B cell (primary cell): ENCODE measurements at regions of chr5 and their contacts with region 1.

Region 1: GRCh38 chr5:77491783-77492652 is at the start of gene WDR41:
- DNase-seq: peak; percentile 93
- ATAC-seq: peak; percentile 85
- H3K4me3 ChIP-seq: peak within 1 kb of the TSS; percentile 60 to 98 (median 95)
- H3K4me3 Mint-ChIP-seq: peak within 1 kb of the TSS; percentile 95
- H3K27ac ChIP-seq: peak within 1 kb of the TSS; percentile 71 to 88
- H3K27ac Mint-ChIP-seq: peak within 1 kb of the TSS; percentile 97
- H3K4me1 ChIP-seq: peaks cover 5 to 6% of the 10 kb centered on the region in 2 donors
- H3K4me1 Mint-ChIP-seq: peaks cover 20% of the 10 kb centered on the region
- H3K27me3 ChIP-seq: no peaks in the 10 kb centered on the region
- H3K27me3 Mint-ChIP-seq: peaks cover 6% of the 10 kb centered on the region
- CTCF ChIP-seq: peak; percentile 92
- total RNA-seq, gene WDR41: 30.6 and 36.3 TPM in 2 replicates

Region 2: DNA sequence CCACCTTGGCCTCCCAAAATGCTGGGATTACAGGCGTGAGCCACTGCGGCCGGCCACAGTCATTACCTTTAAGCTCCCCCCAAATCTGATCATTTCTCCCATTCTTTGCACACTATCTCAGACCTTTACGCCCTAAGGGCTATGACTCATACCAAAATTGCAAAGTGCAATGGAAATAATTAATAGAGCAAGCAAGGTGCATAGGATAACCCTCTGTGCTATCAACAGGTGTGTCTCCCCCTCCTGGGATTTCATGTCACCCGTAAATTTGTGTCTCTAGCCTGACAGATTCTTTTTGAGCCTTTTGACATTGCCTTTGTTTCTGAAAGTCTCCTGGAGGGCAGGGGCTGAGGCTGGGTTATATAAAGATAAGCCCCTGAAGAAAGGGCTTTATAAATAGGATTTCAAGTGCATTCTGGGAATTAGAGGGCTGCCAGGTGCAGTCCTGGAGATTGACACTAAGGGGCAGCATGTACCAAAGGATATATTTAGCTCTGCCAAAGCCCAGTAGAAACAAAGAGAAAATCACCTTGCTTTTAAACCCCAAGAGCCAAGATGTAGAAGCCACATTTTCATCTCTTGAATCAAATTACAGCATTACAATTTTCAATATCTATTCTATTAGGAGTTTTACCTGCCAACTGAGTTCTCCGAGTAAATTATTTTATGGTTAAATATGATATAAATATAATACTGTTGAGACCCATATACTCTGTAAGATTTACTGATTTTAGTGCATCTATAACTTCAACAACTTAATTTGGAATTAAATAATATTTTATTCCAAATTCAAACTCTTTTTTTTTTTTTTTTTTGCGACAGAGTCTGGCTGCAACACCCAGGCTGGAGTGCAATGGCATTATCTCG is 624.0 kb before region 1 on chr5:
- CTCF ChIA-PET with region 1: interaction called, 13 read pairs
- POLR2A ChIA-PET with region 1: no interaction called
- intact Hi-C with region 1: no loop called
- DNase-seq: peak; percentile 70
- ATAC-seq: peak; percentile 74
- H3K4me3 ChIP-seq: no peak overlapping the region
- H3K4me3 Mint-ChIP-seq: no peak overlapping the region
- H3K27ac ChIP-seq: no peak overlapping the region
- H3K27ac Mint-ChIP-seq: no peak overlapping the region
- H3K4me1 ChIP-seq: peaks cover 0 to 2% of the 10 kb centered on the region in 2 donors
- H3K4me1 Mint-ChIP-seq: no peaks in the 10 kb centered on the region
- H3K27me3 ChIP-seq: no peaks in the 10 kb centered on the region
- H3K27me3 Mint-ChIP-seq: no peaks in the 10 kb centered on the region
- CTCF ChIP-seq: peak; percentile 71

Region 3: DNA sequence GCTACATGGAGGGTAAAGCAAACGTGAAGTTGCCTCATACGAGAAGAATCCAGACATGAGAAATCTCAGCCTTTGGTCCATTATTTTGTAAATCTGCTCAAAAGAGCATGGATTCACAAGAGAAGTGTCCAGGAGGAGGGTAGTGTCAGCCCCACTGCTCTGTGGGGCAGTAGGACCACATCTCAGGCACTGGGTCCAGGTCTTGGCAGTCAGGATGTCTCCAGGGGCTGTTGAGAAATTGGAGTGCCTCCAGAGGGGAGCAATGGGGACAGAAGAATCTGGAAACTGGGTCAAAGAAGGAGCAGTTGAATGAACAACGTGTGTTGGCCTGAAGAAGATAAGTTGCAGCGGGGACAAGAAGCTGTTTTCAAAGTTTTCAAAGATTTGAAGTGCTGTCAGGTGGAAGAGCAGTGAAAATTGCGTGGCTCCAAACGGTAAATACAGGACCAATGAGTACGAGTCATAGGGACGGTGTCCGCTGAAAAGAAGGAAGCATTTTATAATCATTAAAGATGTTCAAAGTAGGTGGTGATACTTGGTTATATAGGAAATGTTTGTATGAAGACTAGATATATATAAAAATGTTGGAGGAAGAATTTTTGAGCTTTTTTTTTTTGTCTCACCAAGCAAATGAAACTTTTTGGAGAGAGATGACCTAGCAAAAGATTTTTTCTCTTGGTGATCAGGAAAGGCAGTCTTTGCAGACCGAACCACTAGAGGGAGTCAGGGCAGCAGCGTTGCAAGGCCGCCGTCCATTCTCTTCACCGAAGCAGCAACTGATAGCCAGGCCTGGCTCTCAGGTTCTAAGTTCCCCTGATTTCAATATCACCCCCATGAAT is 347.8 kb before region 1 on chr5:
- CTCF ChIA-PET with region 1: interaction called, 17 read pairs
- POLR2A ChIA-PET with region 1: no interaction called
- intact Hi-C with region 1: no loop called
- DNase-seq: peak; percentile 55
- ATAC-seq: peak; percentile 71
- H3K4me3 ChIP-seq: no peak overlapping the region
- H3K4me3 Mint-ChIP-seq: no peak overlapping the region
- H3K27ac ChIP-seq: no peak overlapping the region
- H3K27ac Mint-ChIP-seq: no peak overlapping the region
- H3K4me1 ChIP-seq: no peaks in the 10 kb centered on the region
- H3K4me1 Mint-ChIP-seq: no peaks in the 10 kb centered on the region
- H3K27me3 ChIP-seq: peaks cover 0 to 2% (median 0%) of the 10 kb centered on the region in 4 experiments
- H3K27me3 Mint-ChIP-seq: peaks cover 2% of the 10 kb centered on the region
- CTCF ChIP-seq: peak; percentile 81

Region 4: GRCh38 chr5:77449277-77449676 is 42.7 kb before region 1 on chr5:
- CTCF ChIA-PET with region 1: no interaction called
- POLR2A ChIA-PET with region 1: no interaction called
- intact Hi-C with region 1: no loop called
- DNase-seq: no peak
- ATAC-seq: no peak
- H3K4me3 ChIP-seq: no peak overlapping the region
- H3K4me3 Mint-ChIP-seq: no peak overlapping the region
- H3K27ac ChIP-seq: no peak overlapping the region
- H3K27ac Mint-ChIP-seq: no peak overlapping the region
- H3K4me1 ChIP-seq: no peaks in the 10 kb centered on the region
- H3K4me1 Mint-ChIP-seq: no peaks in the 10 kb centered on the region
- H3K27me3 ChIP-seq: no peaks in the 10 kb centered on the region
- H3K27me3 Mint-ChIP-seq: no peaks in the 10 kb centered on the region
- CTCF ChIP-seq: no peak

Region 5: DNA sequence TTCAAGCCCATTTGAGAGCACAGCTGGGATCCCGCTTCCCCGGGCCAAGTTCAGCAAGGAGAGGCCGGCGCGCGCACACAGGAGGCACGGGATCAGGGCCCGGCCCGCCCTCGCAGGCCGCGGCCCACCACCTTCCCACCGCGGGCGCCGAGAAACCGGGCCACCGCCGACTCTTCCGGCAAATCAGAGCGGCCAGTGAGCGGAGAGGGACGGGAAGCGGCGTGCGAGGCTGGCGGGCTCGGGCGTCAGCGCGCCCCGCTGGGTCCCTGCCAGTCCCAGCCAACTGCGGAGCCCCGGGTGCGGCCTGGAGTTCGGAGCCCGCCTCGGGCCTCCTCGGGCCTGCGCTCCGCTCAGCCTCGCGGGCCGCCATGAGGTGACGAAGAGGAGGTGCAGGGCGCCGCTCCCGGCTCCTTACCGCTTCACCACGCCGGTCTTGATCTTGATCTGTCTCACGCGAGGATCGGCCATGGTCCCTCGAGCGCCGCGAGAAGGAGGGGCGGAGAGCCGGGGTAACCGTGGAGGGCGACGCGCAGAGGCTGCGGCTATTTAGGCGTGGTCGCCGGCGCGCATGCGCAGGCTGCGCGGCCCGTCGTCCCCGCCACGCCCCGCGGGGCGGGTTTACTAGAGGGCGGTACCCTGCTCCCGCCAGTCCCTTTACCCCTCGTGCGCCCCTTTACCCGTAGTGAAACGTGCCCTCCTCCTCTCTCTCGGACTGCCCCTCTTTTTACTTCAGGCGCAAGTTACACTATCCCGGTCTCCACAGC is 284.0 kb after region 1 on chr5 and contains the start of gene TBCA:
- CTCF ChIA-PET with region 1: no interaction called
- POLR2A ChIA-PET with region 1: no interaction called
- intact Hi-C with region 1: loop called (anchors 1 kb)
- DNase-seq: peak; percentile 98
- ATAC-seq: peak; percentile 85
- H3K4me3 ChIP-seq: peak within 1 kb of the TSS; percentile 55 to 96 (median 74)
- H3K4me3 Mint-ChIP-seq: peak within 1 kb of the TSS; percentile 90
- H3K27ac ChIP-seq: peak within 1 kb of the TSS; percentile 93 to 98
- H3K27ac Mint-ChIP-seq: peak within 1 kb of the TSS; percentile 98
- H3K4me1 ChIP-seq: peaks cover 19 to 22% of the 10 kb centered on the region in 2 donors
- H3K4me1 Mint-ChIP-seq: peaks cover 35% of the 10 kb centered on the region
- H3K27me3 ChIP-seq: no peaks in the 10 kb centered on the region
- H3K27me3 Mint-ChIP-seq: no peaks in the 10 kb centered on the region
- CTCF ChIP-seq: peak; percentile 42
- total RNA-seq, gene TBCA: 94.8 and 110 TPM in 2 replicates

Region 6: GRCh38 chr5:77798456-77798855 is 306.4 kb after region 1 on chr5:
- CTCF ChIA-PET with region 1: no interaction called
- POLR2A ChIA-PET with region 1: no interaction called
- intact Hi-C with region 1: no loop called
- DNase-seq: no peak
- ATAC-seq: no peak
- H3K4me3 ChIP-seq: no peak overlapping the region
- H3K4me3 Mint-ChIP-seq: no peak overlapping the region
- H3K27ac ChIP-seq: no peak overlapping the region
- H3K27ac Mint-ChIP-seq: no peak overlapping the region
- H3K4me1 ChIP-seq: no peaks in the 10 kb centered on the region
- H3K4me1 Mint-ChIP-seq: no peaks in the 10 kb centered on the region
- H3K27me3 ChIP-seq: peaks cover 0 to 17% (median 4%) of the 10 kb centered on the region in 4 experiments
- H3K27me3 Mint-ChIP-seq: peaks cover 39% of the 10 kb centered on the region
- CTCF ChIP-seq: no peak

Region 7: DNA sequence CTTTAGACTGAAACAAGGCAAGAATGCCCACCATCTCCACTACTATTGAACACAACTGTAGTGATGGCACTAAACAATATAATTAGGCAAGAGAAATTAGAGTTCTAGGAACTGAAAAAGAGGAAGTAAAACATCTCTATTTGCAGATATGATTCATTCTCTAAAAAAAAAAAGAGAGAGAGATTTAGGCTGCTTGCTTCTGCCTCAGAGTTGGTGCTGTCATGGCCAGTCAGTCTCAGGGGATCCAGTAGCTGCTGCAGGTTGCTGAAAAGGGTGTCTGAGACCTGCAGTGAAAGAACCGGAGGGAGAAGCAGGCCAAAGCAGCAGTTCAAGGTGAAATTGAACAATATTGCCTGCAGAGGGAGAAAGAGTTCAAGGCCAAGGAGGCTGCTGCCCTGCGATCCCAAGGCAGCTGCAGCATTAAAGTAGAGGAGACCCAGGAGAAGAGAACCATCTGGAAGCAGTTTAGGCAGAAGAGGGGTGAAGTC is 730.0 kb after region 1 on chr5:
- CTCF ChIA-PET with region 1: no interaction called
- POLR2A ChIA-PET with region 1: no interaction called
- intact Hi-C with region 1: loop called (anchors 1 kb)
- DNase-seq: peak; percentile 90
- ATAC-seq: peak; percentile 100
- H3K4me3 ChIP-seq: no peak overlapping the region
- H3K4me3 Mint-ChIP-seq: peak overlapping the region; percentile 4
- H3K27ac ChIP-seq: peak overlapping the region; percentile 29 to 33
- H3K27ac Mint-ChIP-seq: peak overlapping the region; percentile 85
- H3K4me1 ChIP-seq: peaks cover 8 to 10% of the 10 kb centered on the region in 2 donors
- H3K4me1 Mint-ChIP-seq: peaks cover 18% of the 10 kb centered on the region
- H3K27me3 ChIP-seq: no peaks in the 10 kb centered on the region
- H3K27me3 Mint-ChIP-seq: no peaks in the 10 kb centered on the region
- CTCF ChIP-seq: peak; percentile 67

Region 8: DNA sequence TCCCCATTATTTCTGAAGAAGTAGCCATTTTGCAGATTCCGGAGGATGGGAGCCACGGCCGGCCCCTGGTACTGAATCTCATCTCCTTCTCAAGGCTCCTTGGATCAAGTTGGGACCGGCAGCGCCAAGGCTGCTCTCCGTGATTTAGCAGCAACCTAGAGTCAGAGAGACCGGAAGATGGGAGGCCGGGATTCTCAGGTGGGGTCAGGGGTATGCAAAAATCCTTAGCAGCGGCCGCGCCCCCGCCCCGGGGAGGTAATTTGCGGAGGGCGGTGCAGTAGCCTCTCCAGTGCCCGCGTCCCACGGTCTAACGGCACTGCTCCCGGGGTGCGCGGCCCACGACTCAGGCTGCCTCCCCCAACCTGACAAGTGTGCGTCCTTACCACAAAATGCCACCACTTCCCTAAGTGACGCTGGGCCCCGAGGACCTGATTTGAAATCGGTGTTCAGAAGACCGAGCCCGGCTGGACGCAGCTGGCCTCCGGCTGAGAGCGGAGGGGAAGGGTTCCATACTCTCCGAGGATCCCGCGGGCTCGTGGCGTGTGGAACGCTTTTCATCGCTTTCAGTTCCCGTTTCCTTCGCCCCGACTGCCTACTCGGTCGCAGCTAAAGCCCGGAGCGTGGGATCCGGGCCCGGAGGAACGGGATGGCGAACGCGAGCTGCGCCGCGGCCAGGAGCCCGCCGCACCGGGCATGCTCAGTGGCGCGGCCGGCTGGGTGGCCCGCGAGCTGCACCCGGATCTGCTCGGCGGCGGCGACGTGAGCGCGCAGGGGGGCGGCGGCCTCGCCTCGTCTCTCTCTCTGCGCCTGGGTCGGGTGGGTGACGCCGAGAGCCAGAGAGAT is 868.0 kb after region 1 on chr5 and contains the start of gene SCAMP1:
- CTCF ChIA-PET with region 1: no interaction called
- POLR2A ChIA-PET with region 1: no interaction called
- intact Hi-C with region 1: loop called (anchors 1 kb)
- DNase-seq: peak; percentile 97
- ATAC-seq: peak; percentile 87
- H3K4me3 ChIP-seq: peak within 1 kb of the TSS; percentile 67 to 99 (median 88)
- H3K4me3 Mint-ChIP-seq: peak within 1 kb of the TSS; percentile 93
- H3K27ac ChIP-seq: peak within 1 kb of the TSS; percentile 81 to 85
- H3K27ac Mint-ChIP-seq: peak within 1 kb of the TSS; percentile 90
- H3K4me1 ChIP-seq: peaks cover 20 to 22% of the 10 kb centered on the region in 2 donors
- H3K4me1 Mint-ChIP-seq: peaks cover 37% of the 10 kb centered on the region
- H3K27me3 ChIP-seq: no peaks in the 10 kb centered on the region
- H3K27me3 Mint-ChIP-seq: no peaks in the 10 kb centered on the region
- CTCF ChIP-seq: peak; percentile 18
- total RNA-seq, gene SCAMP1: 18.4 and 25.4 TPM in 2 replicates